ENCODE measurements at regions of chr5 and their contacts with region 1.

Region 1: DNA sequence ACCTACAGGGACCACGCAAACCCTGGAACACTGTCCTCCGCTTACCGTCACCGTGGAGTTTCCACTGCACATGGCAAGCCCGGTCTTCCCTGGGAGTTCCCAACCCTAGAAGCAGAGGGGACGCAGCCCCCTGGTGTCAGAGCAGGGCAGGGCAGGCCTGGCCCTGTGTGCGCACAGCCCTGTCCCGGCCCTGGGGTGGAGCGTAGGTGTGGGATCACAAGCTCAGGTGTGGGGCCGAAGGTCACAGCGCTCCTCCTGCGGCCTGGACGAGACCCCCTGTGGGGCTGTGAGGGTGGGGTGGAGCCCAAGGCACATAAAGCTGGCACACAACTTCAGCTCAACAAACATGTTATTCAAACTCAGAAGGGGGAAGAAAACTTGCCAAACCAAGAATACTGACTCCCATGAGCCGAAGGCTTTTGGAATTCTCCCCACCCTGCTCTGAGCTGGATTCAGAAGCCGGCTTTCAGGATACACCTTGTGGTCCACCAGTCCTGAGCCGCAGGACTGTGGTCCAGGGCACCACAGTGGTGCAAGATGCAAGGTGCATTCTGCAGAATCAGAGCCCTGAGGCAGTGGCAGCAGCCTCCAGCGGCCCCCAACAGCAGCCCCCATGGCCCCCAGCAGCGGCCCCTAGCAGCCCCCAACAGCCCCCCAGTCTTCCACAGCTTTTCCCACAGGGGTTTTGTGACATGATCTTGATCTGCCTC is 11.8 kb upstream of the EXOC3 start:
- DNase-seq: no peak
- ATAC-seq: peak; percentile 66 to 74

Region 2: DNA sequence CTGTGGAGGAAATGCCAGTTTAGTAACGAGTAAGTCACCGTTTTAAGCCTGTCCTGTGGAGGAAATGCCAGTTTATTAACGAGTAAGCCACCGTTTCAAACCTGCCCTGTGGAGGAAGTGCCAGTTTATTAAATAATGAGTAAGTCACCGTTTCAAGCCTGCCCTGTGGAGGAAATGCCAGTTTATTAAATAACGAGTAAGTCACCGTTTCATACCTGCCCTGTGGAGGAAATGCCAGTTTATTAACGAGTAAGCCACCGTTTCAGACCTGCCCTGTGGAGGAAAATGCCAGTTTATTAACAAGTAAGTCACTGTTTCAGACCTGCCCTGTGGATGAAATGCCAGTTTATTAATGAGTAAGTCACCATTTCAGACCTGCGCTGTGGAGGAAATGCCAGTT is 178.6 kb before region 1 on chr5:
- intact Hi-C with region 1: no loop called
- DNase-seq: no peak
- ATAC-seq: no peak

Region 3: GRCh38 chr5:317086-317811 is 113.9 kb before region 1 on chr5:
- intact Hi-C with region 1: loop called in 1 of 2 experiments (anchors 10 kb)
- DNase-seq: no peak
- ATAC-seq: peak; percentile 13 to 31